ENCODE measurements at regions of chr16 and their contacts with region 1.

Region 1: GRCh38 chr16:53968896-53969295 is 264.9 kb downstream of the FTO start:
- DNase-seq: no peak
- ATAC-seq: no peak

Region 2: GRCh38 chr16:53991754-53992378 is 23.0 kb after region 1 on chr16:
- intact Hi-C with region 1: loop called (anchors 1 kb)
- DNase-seq: no peak
- ATAC-seq: peak; percentile 62

Measured in sciatic nerve (tissue), 2 donors.